ENCODE measurements at regions of chr17 and their contacts with region 1.

Region 1: GRCh38 chr17:58352014-58352842 is at the start of gene SUPT4H1:
- DNase-seq: peak; percentile 83 to 92
- H3K4me3 ChIP-seq: peak within 1 kb of the TSS; percentile 99
- H3K27ac ChIP-seq: peak within 1 kb of the TSS; percentile 64
- H3K4me1 ChIP-seq: peaks cover 16% of the 10 kb centered on the region
- H3K27me3 ChIP-seq: 0 out of 2 replicates have a peak, but pooled peaks cover 4% of the 10 kb centered on the region
- CTCF ChIP-seq: no peak
- total RNA-seq, gene SUPT4H1: 72.2 and 74.8 TPM in 2 replicates

Region 2: DNA sequence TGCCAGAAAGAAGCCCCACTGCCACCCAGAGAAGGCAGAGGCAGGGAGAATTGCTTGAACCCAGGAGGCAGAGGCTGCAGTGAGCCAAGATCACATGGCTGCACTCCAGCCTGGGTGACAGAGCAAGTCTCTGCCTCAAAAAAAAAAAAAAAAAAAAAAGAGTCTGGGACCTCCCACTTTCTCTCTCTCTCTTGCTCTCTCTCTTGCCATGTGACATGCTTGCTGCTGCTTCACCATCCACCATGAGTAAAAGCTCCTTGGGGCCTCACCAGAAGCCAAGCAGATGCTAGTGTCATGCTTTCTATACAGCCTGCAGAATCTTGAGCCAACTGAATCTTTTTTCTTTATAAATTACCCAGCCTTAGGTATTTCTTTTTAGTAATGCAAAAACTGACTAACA is 323.6 kb before region 1 on chr17:
- CTCF ChIA-PET with region 1: no interaction called
- POLR2A ChIA-PET with region 1: no interaction called
- intact Hi-C with region 1: no loop called
- DNase-seq: no peak
- H3K4me3 ChIP-seq: no peak overlapping the region
- H3K27ac ChIP-seq: no peak overlapping the region
- H3K4me1 ChIP-seq: peaks cover 16% of the 10 kb centered on the region
- H3K27me3 ChIP-seq: no peaks in the 10 kb centered on the region
- CTCF ChIP-seq: no peak

Region 3: GRCh38 chr17:58089115-58089514 is 263.1 kb before region 1 on chr17:
- CTCF ChIA-PET with region 1: no interaction called
- POLR2A ChIA-PET with region 1: no interaction called
- intact Hi-C with region 1: no loop called
- DNase-seq: no peak
- H3K4me3 ChIP-seq: no peak overlapping the region
- H3K27ac ChIP-seq: no peak overlapping the region
- H3K4me1 ChIP-seq: peaks cover 12% of the 10 kb centered on the region; the same call in 1 of the 2 replicates
- H3K27me3 ChIP-seq: no peaks in the 10 kb centered on the region
- CTCF ChIP-seq: no peak

Region 4: DNA sequence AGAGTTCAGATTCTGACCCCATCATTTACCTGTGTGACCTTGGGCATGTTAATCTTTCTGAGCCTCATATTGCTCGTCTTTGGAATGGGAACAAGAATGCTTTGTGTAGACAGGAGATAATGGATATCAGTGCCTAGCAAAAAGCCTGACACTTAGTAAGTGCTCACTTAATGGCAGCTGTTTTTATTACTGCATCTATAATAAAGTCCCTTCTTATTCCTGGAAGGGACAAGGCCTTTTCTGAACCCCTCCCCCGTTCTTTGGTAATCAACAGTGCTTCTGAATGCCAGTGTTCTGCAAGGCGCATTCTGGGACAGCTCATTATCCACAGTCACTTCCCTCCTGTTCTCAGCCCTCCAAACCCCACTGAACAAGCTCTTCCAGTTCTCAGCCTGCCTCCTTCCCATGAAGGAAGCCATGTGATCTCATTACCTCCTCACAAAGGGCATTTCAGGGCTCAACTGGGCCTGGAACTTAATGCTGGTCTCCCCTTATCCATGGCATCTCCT is 24.9 kb after region 1 on chr17:
- CTCF ChIA-PET with region 1: no interaction called
- POLR2A ChIA-PET with region 1: no interaction called
- intact Hi-C with region 1: loop called (anchors 2 kb)
- DNase-seq: peak; percentile 57 to 92
- H3K4me3 ChIP-seq: no peak overlapping the region
- H3K27ac ChIP-seq: no peak overlapping the region
- H3K4me1 ChIP-seq: peaks cover 23% of the 10 kb centered on the region
- H3K27me3 ChIP-seq: peaks cover 14% of the 10 kb centered on the region; the same call in 1 of the 2 replicates
- CTCF ChIP-seq: no peak

Region 5: DNA sequence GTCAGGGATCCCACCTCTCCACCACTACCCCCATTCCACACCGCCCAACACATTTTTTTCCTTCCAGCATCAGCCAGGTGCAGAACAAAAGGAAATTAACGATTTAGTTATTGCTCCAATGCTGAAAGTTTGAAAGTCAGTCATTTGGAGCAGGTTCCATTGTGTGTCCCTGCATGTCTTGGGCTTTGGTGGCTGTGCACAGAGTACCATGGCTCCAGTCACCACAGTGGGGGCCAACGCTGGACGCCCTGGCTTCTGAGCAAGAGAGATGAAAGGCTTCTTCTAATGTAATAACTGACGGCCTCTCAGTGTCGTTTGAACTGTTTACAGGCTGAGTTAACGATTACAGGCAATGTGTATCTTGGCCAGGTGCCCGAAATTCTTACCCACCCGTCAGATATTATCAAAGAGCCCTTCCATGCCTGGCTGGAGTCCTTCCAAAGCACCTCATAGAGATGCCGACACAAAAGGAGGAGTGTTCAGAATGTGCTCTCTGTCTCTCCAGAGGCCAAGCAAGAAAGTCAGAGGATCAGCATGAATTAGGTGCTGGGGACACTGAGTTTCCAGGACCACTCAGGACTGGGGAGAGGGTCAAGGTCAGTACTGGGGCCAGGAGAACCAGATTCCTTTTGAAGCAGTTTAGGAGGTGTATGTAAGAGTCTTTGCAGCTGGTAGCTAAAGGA is 39.2 kb after region 1 on chr17:
- CTCF ChIA-PET with region 1: no interaction called
- POLR2A ChIA-PET with region 1: no interaction called
- intact Hi-C with region 1: loop called (anchors 1 kb)
- DNase-seq: peak; percentile 86 to 94
- H3K4me3 ChIP-seq: no peak overlapping the region
- H3K27ac ChIP-seq: no peak overlapping the region
- H3K4me1 ChIP-seq: peaks cover 60% of the 10 kb centered on the region
- H3K27me3 ChIP-seq: peaks cover 33% of the 10 kb centered on the region; the same call in 1 of the 2 replicates
- CTCF ChIP-seq: no peak

Region 6: DNA sequence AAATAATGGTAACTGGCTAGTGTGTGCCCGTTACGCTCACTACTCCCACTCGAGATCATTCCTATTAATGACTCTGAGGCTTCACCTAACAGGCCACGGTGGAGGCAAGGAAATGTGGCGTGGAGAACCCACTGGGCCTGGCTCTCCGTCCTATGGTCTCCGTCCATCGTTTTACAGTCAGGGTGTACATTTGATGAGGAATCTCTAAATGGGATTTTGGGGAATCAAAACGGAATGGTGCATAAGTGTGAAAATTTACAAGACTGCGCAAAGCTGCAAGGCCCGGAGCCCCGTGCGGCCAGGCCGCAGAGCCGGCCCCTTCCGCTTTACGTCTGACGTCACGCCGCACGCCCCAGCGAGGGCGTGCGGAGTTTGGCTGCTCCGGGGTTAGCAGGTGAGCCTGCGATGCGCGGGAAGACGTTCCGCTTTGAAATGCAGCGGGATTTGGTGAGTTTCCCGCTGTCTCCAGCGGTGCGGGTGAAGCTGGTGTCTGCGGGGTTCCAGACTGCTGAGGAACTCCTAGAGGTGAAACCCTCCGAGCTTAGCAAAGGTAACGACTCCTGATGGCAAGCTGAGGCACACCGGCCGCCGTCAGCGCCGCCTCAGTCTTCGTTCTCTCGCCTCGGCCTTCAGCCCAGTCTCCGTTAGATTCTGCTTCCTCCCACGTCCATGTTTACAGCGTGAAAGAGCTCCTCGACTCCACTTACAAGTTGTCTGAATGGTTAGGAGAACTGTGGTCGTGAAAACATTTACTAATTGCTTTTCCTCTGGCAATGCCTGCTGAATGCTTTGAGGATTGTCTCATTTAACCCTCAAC is 340.2 kb after region 1 on chr17 and contains the start of gene RAD51C:
- CTCF ChIA-PET with region 1: no interaction called
- POLR2A ChIA-PET with region 1: interaction called, 10 read pairs
- intact Hi-C with region 1: no loop called
- DNase-seq: peak; percentile 77 to 81
- H3K4me3 ChIP-seq: peak within 1 kb of the TSS; percentile 59
- H3K27ac ChIP-seq: peak within 1 kb of the TSS; percentile 62
- H3K4me1 ChIP-seq: peaks cover 24% of the 10 kb centered on the region
- H3K27me3 ChIP-seq: no peaks in the 10 kb centered on the region
- CTCF ChIP-seq: no peak
- total RNA-seq, gene RAD51C: 45.7 and 63.4 TPM in 2 replicates

Region 7: DNA sequence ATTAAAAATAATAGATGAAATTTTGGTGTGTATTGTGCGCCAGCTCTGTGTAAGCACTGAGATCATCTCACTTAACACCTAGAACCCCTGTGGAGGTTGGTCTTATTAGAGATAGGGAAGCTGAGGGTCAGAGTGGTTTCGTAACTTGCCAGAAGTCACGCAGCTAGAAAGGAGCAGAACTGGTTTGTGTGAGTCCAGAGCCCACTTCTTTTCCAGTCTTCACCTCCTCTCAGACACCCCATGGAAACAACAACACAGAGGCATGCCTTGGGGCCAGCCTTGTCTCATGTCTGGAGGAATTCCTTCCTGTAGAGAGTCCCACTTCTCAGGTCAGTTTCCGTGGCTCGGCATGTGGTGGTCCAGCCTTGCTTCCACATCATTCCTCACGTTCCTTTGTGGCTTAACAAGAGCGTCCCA is 995.8 kb after region 1 on chr17:
- CTCF ChIA-PET with region 1: no interaction called
- POLR2A ChIA-PET with region 1: no interaction called
- intact Hi-C with region 1: no loop called
- DNase-seq: peak in 1 of 2 experiments; percentile 84
- H3K4me3 ChIP-seq: no peak overlapping the region
- H3K27ac ChIP-seq: peak overlapping the region; percentile 21; the same call in 1 of the 2 replicates
- H3K4me1 ChIP-seq: peaks cover 15% of the 10 kb centered on the region
- H3K27me3 ChIP-seq: no peaks in the 10 kb centered on the region
- CTCF ChIP-seq: no peak